Mammary epithelial cell (primary cell): ENCODE measurements at regions of chr3 and their contacts with region 1.

Region 1: GRCh38 chr3:129650256-129650872 is 43.9 kb upstream of the PLXND1 start:
- DNase-seq: peak; percentile 70
- H3K4me3 ChIP-seq: no peak overlapping the region
- H3K27ac ChIP-seq: no peak overlapping the region
- H3K4me1 ChIP-seq: peaks cover 26% of the 10 kb centered on the region
- H3K27me3 ChIP-seq: no peaks in the 10 kb centered on the region
- CTCF ChIP-seq: peak; percentile 66 to 76

Region 2: GRCh38 chr3:129690406-129690805 is 40.0 kb after region 1 on chr3:
- CTCF ChIA-PET with region 1: no interaction called
- dilution Hi-C with region 1: no loop called
- in situ Hi-C with region 1: no loop called
- intact Hi-C with region 1: loop called (anchors 5 kb)
- DNase-seq: peak; percentile 65
- H3K4me3 ChIP-seq: no peak overlapping the region
- H3K27ac ChIP-seq: no peak overlapping the region
- H3K4me1 ChIP-seq: peaks cover 21% of the 10 kb centered on the region
- H3K27me3 ChIP-seq: no peaks in the 10 kb centered on the region
- CTCF ChIP-seq: no peak

Region 3: DNA sequence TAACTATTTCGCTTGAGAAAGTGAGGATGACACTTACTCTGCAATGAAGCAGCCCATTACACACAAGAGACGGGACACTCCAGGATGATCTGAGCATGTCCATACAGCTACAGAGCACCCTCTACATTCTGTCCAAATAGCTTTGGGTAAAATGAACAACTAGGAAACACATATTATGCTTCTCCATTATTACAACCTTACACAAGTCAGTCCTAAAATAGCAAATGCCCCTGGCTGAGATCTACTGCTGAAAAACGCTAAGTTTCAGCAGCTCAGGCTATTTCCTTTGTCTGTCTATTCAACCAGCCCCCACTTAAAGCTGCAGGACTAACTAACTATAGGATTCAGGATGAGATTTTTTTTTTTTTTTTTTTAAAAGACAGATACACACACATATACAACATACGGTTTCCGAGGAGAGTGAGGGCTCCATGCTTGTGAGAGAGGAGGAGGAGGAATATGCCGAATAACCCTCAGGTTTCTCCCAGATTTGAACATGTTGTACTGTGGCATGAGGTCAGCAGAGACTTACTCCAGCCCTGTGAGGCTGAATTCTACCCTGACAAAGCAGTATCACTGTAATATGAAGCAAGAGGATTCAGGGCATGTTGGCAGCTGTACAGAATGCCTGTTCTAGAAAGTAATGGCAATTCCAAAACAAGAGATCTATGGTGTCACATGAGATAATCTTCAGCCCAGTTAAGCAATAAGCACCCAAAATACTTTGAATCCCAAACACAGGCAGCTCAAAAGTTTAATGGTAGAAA is 73.4 kb after region 1 on chr3:
- CTCF ChIA-PET with region 1: interaction called, 4 read pairs
- dilution Hi-C with region 1: no loop called
- in situ Hi-C with region 1: no loop called
- intact Hi-C with region 1: loop called (anchors 5 kb)
- DNase-seq: peak; percentile 89
- H3K4me3 ChIP-seq: peak overlapping the region; percentile 22 to 46 (median 33)
- H3K27ac ChIP-seq: peak overlapping the region; percentile 89
- H3K4me1 ChIP-seq: peaks cover 21% of the 10 kb centered on the region
- H3K27me3 ChIP-seq: no peaks in the 10 kb centered on the region
- CTCF ChIP-seq: no peak

Region 4: DNA sequence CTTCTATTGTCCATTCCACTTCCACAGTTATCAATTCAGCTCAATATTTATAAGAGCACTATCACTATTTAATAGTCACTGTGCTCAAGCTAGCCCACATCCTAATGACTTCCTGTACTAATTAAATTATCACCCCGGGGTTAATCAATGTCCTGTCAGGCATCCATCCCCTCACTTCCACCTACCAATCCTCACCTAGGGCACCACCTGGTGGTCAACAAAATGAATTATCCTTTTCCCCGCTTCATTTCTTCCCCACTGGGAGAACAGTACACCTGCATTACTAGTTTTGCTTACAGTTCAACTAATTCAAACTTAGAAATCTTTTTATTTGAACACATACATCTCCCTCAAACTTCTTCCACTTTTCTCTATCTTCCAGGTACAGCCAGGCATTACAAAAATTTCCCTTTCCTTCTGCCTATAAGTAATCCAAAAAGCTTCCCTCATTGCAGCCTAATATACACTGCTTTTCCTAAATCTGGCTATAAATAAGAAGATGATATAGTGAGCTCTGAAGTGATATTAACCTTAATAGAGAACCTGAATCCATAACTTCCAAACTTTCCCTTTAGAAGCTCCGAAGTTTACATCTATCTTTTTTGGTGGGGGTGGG is 174.7 kb after region 1 on chr3:
- CTCF ChIA-PET with region 1: no interaction called
- dilution Hi-C with region 1: no loop called
- in situ Hi-C with region 1: loop called in 1 of 2 experiments (anchors 5 kb)
- intact Hi-C with region 1: loop called (anchors 1 kb)
- DNase-seq: peak; percentile 29
- H3K4me3 ChIP-seq: no peak overlapping the region
- H3K27ac ChIP-seq: no peak overlapping the region
- H3K4me1 ChIP-seq: peaks cover 5% of the 10 kb centered on the region
- H3K27me3 ChIP-seq: no peaks in the 10 kb centered on the region
- CTCF ChIP-seq: peak; percentile 52 to 70